Activated naive CD4-positive, alpha-beta T cell treated with anti-CD3 and anti-CD28 coated beads, Interleukin-2, amount 10 ng/mL, durations not matched to agents 7 days and 5 days (primary cell): ENCODE measurements at regions of chr6 and their contacts with region 1.

Region 1: GRCh38 chr6:41775293-41776181 is 4.2 kb downstream of the FRS3 start:
- DNase-seq: peak; percentile 64
- H3K4me3 Mint-ChIP-seq: no peak overlapping the region
- H3K27ac Mint-ChIP-seq: no peak overlapping the region
- H3K4me1 Mint-ChIP-seq: peaks cover 14% of the 10 kb centered on the region
- H3K27me3 Mint-ChIP-seq: peaks cover 9% of the 10 kb centered on the region

Region 2: GRCh38 chr6:41602864-41603608 is 172.5 kb before region 1 on chr6:
- CTCF ChIA-PET with region 1: interaction called, 18 read pairs
- DNase-seq: peak; percentile 83
- H3K4me3 Mint-ChIP-seq: no peak overlapping the region
- H3K27ac Mint-ChIP-seq: no peak overlapping the region
- H3K4me1 Mint-ChIP-seq: peaks cover 2% of the 10 kb centered on the region
- H3K27me3 Mint-ChIP-seq: peaks cover 29% of the 10 kb centered on the region

Region 3: GRCh38 chr6:41705996-41706835 is 69.3 kb before region 1 on chr6:
- CTCF ChIA-PET with region 1: interaction called, 19 read pairs
- DNase-seq: peak; percentile 76
- H3K4me3 Mint-ChIP-seq: peak overlapping the region; percentile 42
- H3K27ac Mint-ChIP-seq: peak overlapping the region; percentile 80
- H3K4me1 Mint-ChIP-seq: peaks cover 46% of the 10 kb centered on the region
- H3K27me3 Mint-ChIP-seq: no peaks in the 10 kb centered on the region

Region 4: DNA sequence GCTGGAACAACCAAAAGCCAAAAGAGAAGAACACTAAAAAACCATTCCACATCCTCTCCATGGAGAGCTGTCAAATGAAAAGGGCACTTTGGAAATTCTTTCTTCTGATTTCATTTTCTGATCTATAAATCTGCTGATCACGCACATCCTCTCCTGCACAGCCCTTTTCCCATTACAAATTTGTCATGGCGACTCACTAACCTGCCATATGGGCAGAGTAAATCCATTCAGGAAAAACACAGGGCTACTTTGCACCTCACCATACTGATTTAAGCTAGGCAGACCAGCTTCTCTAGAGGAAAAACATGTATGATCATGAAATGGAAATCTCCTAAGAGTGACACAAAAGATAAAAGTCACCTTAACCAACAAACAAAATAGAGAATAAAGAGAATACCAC is 37.9 kb after region 1 on chr6:
- CTCF ChIA-PET with region 1: no interaction called
- DNase-seq: no peak
- H3K4me3 Mint-ChIP-seq: no peak overlapping the region
- H3K27ac Mint-ChIP-seq: no peak overlapping the region
- H3K4me1 Mint-ChIP-seq: peaks cover 3% of the 10 kb centered on the region
- H3K27me3 Mint-ChIP-seq: peaks cover 4% of the 10 kb centered on the region